A673 (cell line): ENCODE measurements at regions of chr4 and their contacts with region 1.

Region 1: GRCh38 chr4:101647710-101648034 is 142.9 kb upstream of the BANK1 start:
- DNase-seq: peak; percentile 72
- H3K4me3 ChIP-seq: no peak overlapping the region
- H3K27ac ChIP-seq: peak overlapping the region; percentile 56
- H3K4me1 ChIP-seq: peaks cover 34% of the 10 kb centered on the region
- H3K27me3 ChIP-seq: no peaks in the 10 kb centered on the region
- CTCF ChIP-seq: no peak

Region 2: DNA sequence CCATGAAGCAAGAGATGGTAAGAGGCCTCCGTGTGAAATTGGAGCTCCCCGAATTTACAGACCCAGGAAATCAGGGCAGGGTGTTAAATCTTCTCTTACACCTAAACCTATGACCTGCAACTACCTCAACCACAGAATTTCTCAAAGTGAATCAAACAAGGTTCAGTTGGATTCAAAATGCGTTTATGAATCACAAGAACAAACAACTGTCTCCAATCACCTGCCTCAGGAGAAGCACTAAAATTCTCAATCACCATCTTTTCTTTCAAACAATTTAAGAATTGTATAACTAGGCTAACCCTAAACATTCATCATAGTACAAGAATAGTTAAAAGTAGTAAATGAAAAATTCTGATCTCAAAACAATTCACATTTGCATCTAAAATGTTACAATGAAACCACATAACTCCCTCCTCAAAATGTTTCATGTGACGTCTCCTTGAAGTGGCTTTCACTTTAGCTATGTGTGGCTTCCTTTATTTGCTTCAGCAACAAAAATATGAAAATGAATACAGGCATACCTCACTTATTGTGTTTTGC is 319.5 kb before region 1 on chr4:
- CTCF ChIA-PET with region 1: no interaction called
- POLR2A ChIA-PET with region 1: no interaction called
- intact Hi-C with region 1: loop called (anchors 1 kb)
- DNase-seq: no peak
- H3K4me3 ChIP-seq: no peak overlapping the region
- H3K27ac ChIP-seq: peak overlapping the region; percentile 90
- H3K4me1 ChIP-seq: peaks cover 70% of the 10 kb centered on the region
- H3K27me3 ChIP-seq: no peaks in the 10 kb centered on the region
- CTCF ChIP-seq: no peak